Colonic mucosa (tissue), 4 donors: ENCODE measurements at regions of chr9 and their contacts with region 1.

Region 1: GRCh38 chr9:33374634-33375213 is 27.6 kb downstream of the AQP7 start:
- DNase-seq: peak; percentile 85
- H3K4me3 ChIP-seq: no peak overlapping the region
- H3K27ac ChIP-seq: peak overlapping the region; percentile 27
- H3K4me1 ChIP-seq: no peaks in the 10 kb centered on the region
- H3K27me3 ChIP-seq: no peaks in the 10 kb centered on the region
- CTCF ChIP-seq: peak; percentile 80

Region 2: DNA sequence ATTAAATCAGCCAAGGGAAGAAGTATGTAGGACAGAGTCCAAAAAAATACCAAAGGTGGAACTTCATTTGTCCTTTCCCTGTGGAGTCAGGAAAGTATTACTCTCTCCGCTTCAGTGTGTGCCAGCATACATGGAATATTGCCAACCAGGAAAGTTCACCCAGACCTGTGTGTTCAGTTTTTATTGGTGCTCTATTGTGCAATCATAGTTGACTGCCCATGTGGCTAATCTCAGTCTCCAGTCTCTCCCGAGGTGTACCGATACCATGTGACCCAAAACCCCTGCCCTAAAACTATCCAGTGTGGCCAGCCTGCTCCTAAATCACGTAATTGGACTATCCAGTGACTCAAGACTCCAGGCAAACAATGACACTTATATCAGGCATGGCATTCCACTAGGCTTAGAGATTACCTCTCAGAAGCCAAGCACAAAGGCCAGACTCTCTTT is 45.6 kb before region 1 on chr9:
- intact Hi-C with region 1: no loop called
- DNase-seq: peak; percentile 91
- H3K4me3 ChIP-seq: no peak overlapping the region
- H3K27ac ChIP-seq: peak overlapping the region; percentile 82
- H3K4me1 ChIP-seq: peaks cover 12% of the 10 kb centered on the region
- H3K27me3 ChIP-seq: no peaks in the 10 kb centered on the region
- CTCF ChIP-seq: no peak

Region 3: GRCh38 chr9:33415501-33416038 is 40.8 kb after region 1 on chr9:
- intact Hi-C with region 1: loop called (anchors 2 kb)
- DNase-seq: peak; percentile 95
- H3K4me3 ChIP-seq: no peak overlapping the region
- H3K27ac ChIP-seq: peak overlapping the region; percentile 20
- H3K4me1 ChIP-seq: peaks cover 19% of the 10 kb centered on the region
- H3K27me3 ChIP-seq: no peaks in the 10 kb centered on the region
- CTCF ChIP-seq: peak; percentile 77

Region 4: DNA sequence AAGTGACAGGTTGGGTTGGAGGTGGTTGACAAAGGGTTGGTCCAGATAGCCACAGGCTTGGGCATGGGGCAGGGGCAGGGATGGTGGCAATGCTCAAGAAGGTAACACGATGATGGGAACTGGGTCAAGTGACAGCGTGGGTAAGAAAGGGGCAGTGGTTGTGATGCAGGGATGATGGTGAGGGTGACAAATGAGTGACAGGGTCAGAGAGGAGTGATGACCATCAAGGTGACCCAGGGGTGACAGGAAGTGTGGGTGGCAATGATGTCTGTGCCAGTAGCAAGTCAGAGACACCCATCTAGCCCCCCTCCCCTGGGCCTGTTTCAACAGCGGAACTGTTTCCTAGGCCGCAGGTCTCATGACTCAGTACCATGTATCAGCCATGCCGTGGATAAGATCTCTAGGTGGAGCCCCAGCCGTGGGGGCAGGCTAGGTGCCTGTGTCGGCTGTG is 52.1 kb after region 1 on chr9:
- intact Hi-C with region 1: no loop called
- DNase-seq: no peak
- H3K4me3 ChIP-seq: no peak overlapping the region
- H3K27ac ChIP-seq: no peak overlapping the region
- H3K4me1 ChIP-seq: no peaks in the 10 kb centered on the region
- H3K27me3 ChIP-seq: no peaks in the 10 kb centered on the region
- CTCF ChIP-seq: no peak